Dendritic cell treated with granulocyte-macrophage colony-stimulating factor and Interleukin-4, amounts not matched to agents 40 ng/mL and 50 ng/mL, for 4 days (primary cell): ENCODE measurements at regions of chr6 and their contacts with region 1.

Region 1: GRCh38 chr6:83067448-83068413 is at the start of gene DOP1A:
- H3K4me3 Mint-ChIP-seq: peak within 1 kb of the TSS; percentile 87
- H3K27ac Mint-ChIP-seq: peak within 1 kb of the TSS; percentile 89
- H3K4me1 Mint-ChIP-seq: peaks cover 32% of the 10 kb centered on the region
- H3K27me3 Mint-ChIP-seq: no peaks in the 10 kb centered on the region

Region 2: DNA sequence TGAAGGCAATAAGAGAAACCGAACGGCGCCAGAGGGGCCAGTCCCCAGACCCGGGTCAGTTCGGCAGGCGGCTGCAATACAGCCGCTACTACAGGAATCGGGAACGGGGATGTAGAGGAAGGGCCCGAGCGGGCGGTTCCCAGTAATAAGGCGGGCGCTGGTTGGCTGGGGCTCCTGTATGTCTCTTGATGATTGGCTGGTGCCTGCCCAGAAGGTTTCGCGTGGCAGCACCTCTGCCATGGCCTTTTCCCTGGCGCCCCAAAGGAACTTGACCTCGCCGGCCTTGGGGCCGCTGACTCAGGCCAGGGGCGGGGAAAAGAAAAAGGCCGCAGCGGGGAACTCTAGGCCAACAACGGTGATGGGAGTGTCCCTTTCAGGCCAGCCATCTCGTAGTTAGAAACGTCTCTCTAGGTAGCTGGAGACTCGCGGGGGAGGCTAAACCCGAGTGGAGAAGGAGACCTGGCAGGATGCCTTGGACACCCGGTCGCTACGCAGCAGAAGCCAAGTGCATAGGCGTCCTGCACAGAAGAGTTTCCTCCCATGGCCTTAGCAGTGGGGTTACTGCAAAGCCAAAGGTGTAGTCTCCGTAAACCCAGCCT is 820.0 kb before region 1 on chr6 and contains the start of gene IBTK:
- intact Hi-C with region 1: loop called (anchors 2 kb)
- H3K4me3 Mint-ChIP-seq: peak within 1 kb of the TSS; percentile 87
- H3K27ac Mint-ChIP-seq: peak within 1 kb of the TSS; percentile 96
- H3K4me1 Mint-ChIP-seq: peaks cover 38% of the 10 kb centered on the region
- H3K27me3 Mint-ChIP-seq: no peaks in the 10 kb centered on the region

Region 3: GRCh38 chr6:83019741-83020140 is 48.0 kb before region 1 on chr6:
- intact Hi-C with region 1: no loop called
- H3K4me3 Mint-ChIP-seq: no peak overlapping the region
- H3K27ac Mint-ChIP-seq: no peak overlapping the region
- H3K4me1 Mint-ChIP-seq: no peaks in the 10 kb centered on the region
- H3K27me3 Mint-ChIP-seq: no peaks in the 10 kb centered on the region

Region 4: GRCh38 chr6:83160167-83160566 is 92.4 kb after region 1 on chr6:
- intact Hi-C with region 1: no loop called
- H3K4me3 Mint-ChIP-seq: no peak overlapping the region
- H3K27ac Mint-ChIP-seq: no peak overlapping the region
- H3K4me1 Mint-ChIP-seq: no peaks in the 10 kb centered on the region
- H3K27me3 Mint-ChIP-seq: no peaks in the 10 kb centered on the region

Region 5: GRCh38 chr6:83192871-83193746 is 125.4 kb after region 1 on chr6 and contains the starts of genes PGM3 and RWDD2A:
- intact Hi-C with region 1: loop called (anchors 2 kb)
- H3K4me3 Mint-ChIP-seq: peak within 1 kb of the TSS; percentile 93
- H3K27ac Mint-ChIP-seq: peak within 1 kb of the TSS; percentile 92
- H3K4me1 Mint-ChIP-seq: peaks cover 15% of the 10 kb centered on the region
- H3K27me3 Mint-ChIP-seq: peaks cover 10% of the 10 kb centered on the region

Region 6: DNA sequence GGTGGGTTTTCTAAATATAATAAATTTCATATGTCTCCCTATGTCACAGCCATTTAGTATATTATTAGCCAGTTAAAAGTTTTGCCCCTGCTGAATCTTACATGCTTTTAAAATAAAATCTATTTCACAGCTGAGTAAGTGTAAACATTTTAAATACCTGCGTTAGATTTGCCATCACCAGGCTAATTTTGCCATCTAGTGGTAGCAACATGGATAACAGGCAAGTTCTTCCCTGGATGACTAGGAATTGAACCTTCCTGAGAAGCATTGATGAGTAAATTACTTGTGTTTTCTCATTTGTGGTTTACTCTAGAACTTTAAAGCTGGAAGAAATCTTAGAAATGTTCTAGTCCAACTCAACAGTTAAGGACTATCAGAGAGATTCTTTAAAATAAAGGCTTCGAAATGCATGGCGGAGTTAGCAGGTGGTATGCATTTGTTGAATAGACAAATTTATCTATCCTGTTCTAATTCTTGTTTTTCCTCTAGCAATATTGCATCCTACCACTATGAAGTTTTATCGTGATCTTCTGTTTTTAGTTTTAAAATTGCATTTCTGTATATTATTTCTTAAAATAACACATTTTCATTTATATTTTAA is 447.2 kb after region 1 on chr6:
- intact Hi-C with region 1: loop called (anchors 10 kb)
- H3K4me3 Mint-ChIP-seq: no peak overlapping the region
- H3K27ac Mint-ChIP-seq: no peak overlapping the region
- H3K4me1 Mint-ChIP-seq: peaks cover 18% of the 10 kb centered on the region
- H3K27me3 Mint-ChIP-seq: peaks cover 48% of the 10 kb centered on the region

Region 7: GRCh38 chr6:84227434-84228197 is 1159.9 kb after region 1 on chr6 and contains the start of gene CEP162:
- intact Hi-C with region 1: loop called (anchors 10 kb)
- H3K4me3 Mint-ChIP-seq: peak within 1 kb of the TSS; percentile 99
- H3K27ac Mint-ChIP-seq: peak within 1 kb of the TSS; percentile 86
- H3K4me1 Mint-ChIP-seq: peaks cover 21% of the 10 kb centered on the region
- H3K27me3 Mint-ChIP-seq: peaks cover 20% of the 10 kb centered on the region